MCF 10A (cell line): ENCODE measurements at regions of chr14 and their contacts with region 1.

Region 1: GRCh38 chr14:35004839-35005238 is 22.0 kb downstream of the SRP54 start:
- DNase-seq: no peak
- H3K4me3 Mint-ChIP-seq: no peak overlapping the region
- H3K27ac Mint-ChIP-seq: no peak overlapping the region
- H3K4me1 Mint-ChIP-seq: no peaks in the 10 kb centered on the region
- H3K27me3 Mint-ChIP-seq: no peaks in the 10 kb centered on the region
- CTCF ChIP-seq: no peak

Region 2: GRCh38 chr14:34989762-34990161 is 15.1 kb before region 1 on chr14:
- CTCF ChIA-PET with region 1: no interaction called
- POLR2A ChIA-PET with region 1: no interaction called
- intact Hi-C with region 1: no loop called
- DNase-seq: no peak
- H3K4me3 Mint-ChIP-seq: no peak overlapping the region
- H3K27ac Mint-ChIP-seq: no peak overlapping the region
- H3K4me1 Mint-ChIP-seq: peaks cover 11% of the 10 kb centered on the region
- H3K27me3 Mint-ChIP-seq: no peaks in the 10 kb centered on the region
- CTCF ChIP-seq: no peak

Region 3: DNA sequence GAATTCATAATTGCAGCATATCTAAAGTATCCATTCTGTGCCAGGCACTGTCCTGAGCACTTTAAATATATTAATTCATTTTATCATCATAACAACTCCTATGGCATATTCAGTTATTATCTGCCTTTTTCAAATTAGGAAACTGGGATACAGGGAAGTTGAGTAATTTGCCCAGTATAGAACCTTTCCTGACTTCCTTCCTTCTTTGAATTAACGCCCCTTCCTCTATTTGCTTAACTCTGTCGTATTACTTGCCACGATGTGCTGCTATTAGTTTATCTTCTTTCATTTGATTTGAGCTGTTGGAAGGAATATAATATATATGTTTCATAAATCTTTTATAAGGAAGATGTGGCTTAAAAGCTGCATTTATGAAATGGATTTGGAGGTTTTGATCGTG is 15.9 kb after region 1 on chr14:
- CTCF ChIA-PET with region 1: no interaction called
- POLR2A ChIA-PET with region 1: interaction called, 12 read pairs
- intact Hi-C with region 1: no loop called
- DNase-seq: no peak
- H3K4me3 Mint-ChIP-seq: no peak overlapping the region
- H3K27ac Mint-ChIP-seq: peak overlapping the region; percentile 60
- H3K4me1 Mint-ChIP-seq: no peaks in the 10 kb centered on the region
- H3K27me3 Mint-ChIP-seq: no peaks in the 10 kb centered on the region
- CTCF ChIP-seq: no peak

Region 4: GRCh38 chr14:35134328-35135123 is 129.7 kb after region 1 on chr14:
- CTCF ChIA-PET with region 1: no interaction called
- POLR2A ChIA-PET with region 1: no interaction called
- intact Hi-C with region 1: no loop called
- DNase-seq: peak; percentile 70
- H3K4me3 Mint-ChIP-seq: no peak overlapping the region
- H3K27ac Mint-ChIP-seq: peak overlapping the region; percentile 11
- H3K4me1 Mint-ChIP-seq: peaks cover 19% of the 10 kb centered on the region
- H3K27me3 Mint-ChIP-seq: no peaks in the 10 kb centered on the region
- CTCF ChIP-seq: no peak